ENCODE measurements at regions of chr5 and their contacts with region 1.

Region 1: DNA sequence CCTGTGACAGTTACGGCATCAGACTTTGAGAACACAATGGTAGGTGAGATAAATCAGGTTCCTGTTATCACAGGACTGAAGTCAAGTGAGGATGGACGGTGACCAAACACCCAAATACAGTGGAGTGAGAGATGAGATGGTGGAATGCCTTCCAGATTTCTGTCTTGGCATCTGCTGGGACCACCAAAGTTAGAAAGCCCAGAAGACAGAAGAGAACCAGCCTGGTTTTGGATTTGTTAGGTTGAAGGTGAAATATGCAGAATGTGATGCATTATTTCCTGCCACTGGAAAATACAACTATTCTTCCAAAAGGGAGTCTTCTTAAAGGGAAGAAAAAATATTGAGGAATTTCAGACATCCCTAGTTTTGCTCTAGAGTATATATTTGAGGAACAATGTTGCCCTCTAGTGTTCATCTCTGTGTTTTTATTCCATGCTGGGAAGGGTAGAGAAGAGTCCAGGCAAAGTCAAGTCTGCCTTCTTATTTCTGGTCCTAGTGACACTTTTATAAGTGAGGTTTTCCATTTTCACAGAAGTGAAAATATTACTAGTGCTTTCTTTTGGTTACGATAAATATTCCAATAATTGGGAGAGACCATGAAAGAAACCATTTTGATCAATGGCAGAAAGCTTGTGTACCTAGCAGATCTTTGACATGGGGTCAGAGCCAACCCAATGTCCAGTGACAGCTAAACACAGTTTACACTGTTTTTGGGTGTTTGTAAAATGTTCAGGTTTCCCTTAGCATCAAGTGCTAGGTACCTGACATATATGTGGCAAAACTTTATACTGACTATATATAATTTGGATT is 142.3 kb upstream of the ANKH start:
- DNase-seq: peak in 5 of 9 donors; percentile 15 to 41 (median 31)
- ATAC-seq: peak; percentile 73
- H3K4me3 ChIP-seq: no peak overlapping the region
- H3K4me3 Mint-ChIP-seq: no peak overlapping the region
- H3K27ac ChIP-seq: no peak overlapping the region
- H3K27ac Mint-ChIP-seq: no peak overlapping the region
- H3K4me1 ChIP-seq: no peaks in the 10 kb centered on the region
- H3K4me1 Mint-ChIP-seq: no peaks in the 10 kb centered on the region
- H3K27me3 ChIP-seq: no peaks in the 10 kb centered on the region
- H3K27me3 Mint-ChIP-seq: peaks cover 0 to 7% (median 0%) of the 10 kb centered on the region in 5 donors

Region 2: GRCh38 chr5:14351845-14352712 is 661.8 kb before region 1 on chr5:
- CTCF ChIA-PET with region 1: no interaction called
- POLR2A ChIA-PET with region 1: no interaction called
- intact Hi-C with region 1: loop called (anchors 1 to 2 kb)
- DNase-seq: peak; percentile 22 to 64 (median 50)
- ATAC-seq: peak; percentile 94
- H3K4me3 ChIP-seq: no peak overlapping the region
- H3K4me3 Mint-ChIP-seq: no peak overlapping the region
- H3K27ac ChIP-seq: no peak overlapping the region
- H3K27ac Mint-ChIP-seq: no peak overlapping the region
- H3K4me1 ChIP-seq: no peaks in the 10 kb centered on the region
- H3K4me1 Mint-ChIP-seq: peaks cover 0 to 4% (median 0%) of the 10 kb centered on the region in 7 donors
- H3K27me3 ChIP-seq: no peaks in the 10 kb centered on the region
- H3K27me3 Mint-ChIP-seq: peaks cover 0 to 8% (median 0%) of the 10 kb centered on the region in 5 donors

Region 3: DNA sequence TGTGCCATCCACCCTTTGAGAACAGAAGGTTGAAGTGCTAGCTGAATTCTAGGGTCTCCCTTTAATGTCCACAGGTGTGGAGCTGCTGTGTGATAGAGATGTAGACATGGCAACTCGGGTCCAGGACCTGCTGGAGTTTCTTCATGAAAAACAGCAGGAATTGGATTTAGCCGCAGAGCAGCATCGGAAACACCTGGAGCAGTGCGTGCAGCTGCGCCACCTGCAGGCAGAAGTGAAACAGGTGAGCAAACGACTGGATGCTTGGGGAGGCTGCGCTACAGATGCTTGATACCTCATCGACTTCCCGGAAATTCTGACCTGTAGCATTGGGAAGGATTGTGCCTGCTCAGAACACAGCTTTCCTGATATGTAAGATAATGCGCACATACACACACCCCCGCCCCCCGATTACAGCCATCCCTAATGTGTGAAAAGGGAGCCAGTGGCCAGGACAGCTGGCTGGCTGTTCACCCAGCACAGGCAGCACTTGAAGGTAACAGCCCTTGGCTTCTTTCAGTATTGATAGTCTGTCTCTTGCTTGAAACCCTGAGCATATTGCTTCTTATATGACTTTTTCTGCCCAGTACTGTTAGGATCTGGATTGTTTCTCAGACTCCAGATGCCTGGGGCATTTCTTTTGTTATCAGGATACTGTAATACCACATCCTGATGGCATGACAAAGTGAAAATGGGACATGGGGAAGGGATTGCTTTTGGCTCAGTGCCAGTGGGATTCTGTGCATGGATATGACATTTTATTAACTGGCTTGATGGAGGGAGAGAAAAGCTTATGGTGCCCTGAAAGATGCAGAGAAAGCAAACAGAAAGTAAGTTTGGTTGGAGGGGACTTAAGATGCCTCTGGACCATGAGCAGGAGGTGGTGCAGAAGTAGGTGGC is 649.0 kb before region 1 on chr5:
- CTCF ChIA-PET with region 1: no interaction called
- POLR2A ChIA-PET with region 1: no interaction called
- intact Hi-C with region 1: loop called in 1 of 2 experiments (anchors 1 kb)
- DNase-seq: no peak
- ATAC-seq: no peak
- H3K4me3 ChIP-seq: no peak overlapping the region
- H3K4me3 Mint-ChIP-seq: peak overlapping the region in 1 of 10 donors; percentile 48
- H3K27ac ChIP-seq: no peak overlapping the region
- H3K27ac Mint-ChIP-seq: peak overlapping the region in 4 of 9 donors; percentile 13 to 73 (median 46)
- H3K4me1 ChIP-seq: peaks cover 9 to 12% of the 10 kb centered on the region in 2 donors
- H3K4me1 Mint-ChIP-seq: peaks cover 17 to 55% (median 28%) of the 10 kb centered on the region in 7 donors
- H3K27me3 ChIP-seq: no peaks in the 10 kb centered on the region
- H3K27me3 Mint-ChIP-seq: no peaks in the 10 kb centered on the region

Region 4: GRCh38 chr5:14399054-14399692 is 614.7 kb before region 1 on chr5:
- CTCF ChIA-PET with region 1: no interaction called
- POLR2A ChIA-PET with region 1: no interaction called
- intact Hi-C with region 1: loop called in 1 of 2 experiments (anchors 1 kb)
- DNase-seq: peak in 6 of 9 donors; percentile 26 to 67 (median 53)
- ATAC-seq: peak; percentile 72
- H3K4me3 ChIP-seq: no peak overlapping the region
- H3K4me3 Mint-ChIP-seq: no peak overlapping the region
- H3K27ac ChIP-seq: no peak overlapping the region
- H3K27ac Mint-ChIP-seq: peak overlapping the region in 1 of 9 donors; percentile 7
- H3K4me1 ChIP-seq: no peaks in the 10 kb centered on the region
- H3K4me1 Mint-ChIP-seq: peaks cover 0 to 47% (median 19%) of the 10 kb centered on the region in 7 donors
- H3K27me3 ChIP-seq: no peaks in the 10 kb centered on the region
- H3K27me3 Mint-ChIP-seq: peaks cover 0 to 2% (median 0%) of the 10 kb centered on the region in 5 donors

Region 5: GRCh38 chr5:14727428-14727865 is 286.4 kb before region 1 on chr5:
- CTCF ChIA-PET with region 1: interaction called, 5 read pairs
- POLR2A ChIA-PET with region 1: no interaction called
- intact Hi-C with region 1: loop called (anchors 1 kb)
- DNase-seq: peak; percentile 47 to 79 (median 69)
- ATAC-seq: peak; percentile 77
- H3K4me3 ChIP-seq: no peak overlapping the region
- H3K4me3 Mint-ChIP-seq: no peak overlapping the region
- H3K27ac ChIP-seq: no peak overlapping the region
- H3K27ac Mint-ChIP-seq: peak overlapping the region in 5 of 9 donors; percentile 5 to 49 (median 42)
- H3K4me1 ChIP-seq: peaks cover 0 to 4% of the 10 kb centered on the region in 2 donors
- H3K4me1 Mint-ChIP-seq: peaks cover 8 to 22% (median 16%) of the 10 kb centered on the region in 7 donors
- H3K27me3 ChIP-seq: no peaks in the 10 kb centered on the region
- H3K27me3 Mint-ChIP-seq: no peaks in the 10 kb centered on the region

Region 6: DNA sequence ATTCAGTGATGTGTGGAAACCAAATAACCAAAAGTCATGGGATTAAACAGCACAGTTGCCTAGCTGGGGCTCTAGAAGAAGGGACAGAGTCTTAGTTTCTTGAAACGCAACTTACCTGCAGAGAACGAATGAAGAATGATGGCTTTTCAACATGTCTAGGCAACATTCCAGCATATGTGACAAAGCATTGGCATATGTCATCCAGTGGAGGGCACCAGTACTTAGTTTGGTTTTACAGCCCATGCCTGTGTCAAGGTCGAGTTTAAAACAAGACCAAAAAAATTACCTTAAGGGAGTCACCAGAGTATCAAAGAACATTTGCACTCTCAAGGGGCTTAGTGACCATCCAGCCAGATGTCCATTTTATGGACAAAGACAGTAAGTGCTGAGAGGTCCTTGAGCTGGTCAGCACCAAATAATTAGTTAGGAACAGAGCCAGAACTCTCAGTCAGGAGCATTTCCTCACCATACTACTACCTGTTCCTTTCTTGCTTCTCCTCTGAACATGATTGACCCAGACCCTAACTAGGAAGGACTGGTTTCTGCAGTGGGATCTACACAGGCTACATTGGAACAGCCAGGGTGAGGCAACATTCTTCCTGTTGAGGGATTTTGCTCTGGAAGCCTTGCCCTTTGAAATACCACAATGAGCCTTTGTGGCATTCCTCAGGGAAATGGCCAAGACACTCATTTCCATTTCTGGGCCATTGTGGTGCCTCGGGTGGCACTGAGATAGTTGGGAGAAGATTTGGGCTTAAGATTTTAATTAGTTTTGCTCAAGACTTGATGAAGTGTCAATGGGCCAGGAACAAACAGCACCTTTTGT is 66.8 kb before region 1 on chr5:
- CTCF ChIA-PET with region 1: no interaction called
- POLR2A ChIA-PET with region 1: no interaction called
- intact Hi-C with region 1: loop called in 1 of 2 experiments (anchors 1 kb)
- DNase-seq: peak in 7 of 9 donors; percentile 34 to 66 (median 56)
- ATAC-seq: peak; percentile 92
- H3K4me3 ChIP-seq: no peak overlapping the region
- H3K4me3 Mint-ChIP-seq: no peak overlapping the region
- H3K27ac ChIP-seq: no peak overlapping the region
- H3K27ac Mint-ChIP-seq: no peak overlapping the region
- H3K4me1 ChIP-seq: no peaks in the 10 kb centered on the region
- H3K4me1 Mint-ChIP-seq: peaks cover 0 to 9% (median 5%) of the 10 kb centered on the region in 7 donors
- H3K27me3 ChIP-seq: no peaks in the 10 kb centered on the region
- H3K27me3 Mint-ChIP-seq: peaks cover 0 to 5% (median 4%) of the 10 kb centered on the region in 5 donors

Region 7: DNA sequence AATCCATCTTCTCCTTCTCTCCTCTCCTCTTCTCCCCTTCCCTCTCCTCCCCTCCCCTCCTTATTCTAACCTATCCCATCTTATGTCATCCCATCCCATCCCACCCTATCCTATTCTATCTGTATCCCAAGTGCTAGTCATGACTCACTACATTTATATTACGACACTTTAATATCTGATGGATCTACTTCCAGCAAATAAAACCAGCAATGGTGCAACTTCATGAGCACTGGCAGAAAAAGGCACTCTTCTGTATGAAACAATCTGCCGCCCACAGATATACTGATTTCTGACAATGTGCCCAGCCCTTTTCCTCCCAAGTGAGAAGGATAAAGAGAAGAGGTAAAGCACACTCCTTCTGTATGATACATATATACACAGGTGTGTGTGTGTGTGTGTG is 55.7 kb before region 1 on chr5:
- CTCF ChIA-PET with region 1: interaction called, 4 read pairs
- POLR2A ChIA-PET with region 1: no interaction called
- intact Hi-C with region 1: loop called in 1 of 2 experiments (anchors 1 kb)
- DNase-seq: no peak
- ATAC-seq: no peak
- H3K4me3 ChIP-seq: no peak overlapping the region
- H3K4me3 Mint-ChIP-seq: no peak overlapping the region
- H3K27ac ChIP-seq: no peak overlapping the region
- H3K27ac Mint-ChIP-seq: no peak overlapping the region
- H3K4me1 ChIP-seq: no peaks in the 10 kb centered on the region
- H3K4me1 Mint-ChIP-seq: peaks cover 0 to 5% (median 0%) of the 10 kb centered on the region in 7 donors
- H3K27me3 ChIP-seq: no peaks in the 10 kb centered on the region
- H3K27me3 Mint-ChIP-seq: peaks cover 0 to 10% (median 0%) of the 10 kb centered on the region in 5 donors

Measured in naive thymus-derived CD4-positive, alpha-beta T cell (primary cell).